B cell (primary cell): ENCODE measurements at regions of chr3 and their contacts with region 1.

Region 1: DNA sequence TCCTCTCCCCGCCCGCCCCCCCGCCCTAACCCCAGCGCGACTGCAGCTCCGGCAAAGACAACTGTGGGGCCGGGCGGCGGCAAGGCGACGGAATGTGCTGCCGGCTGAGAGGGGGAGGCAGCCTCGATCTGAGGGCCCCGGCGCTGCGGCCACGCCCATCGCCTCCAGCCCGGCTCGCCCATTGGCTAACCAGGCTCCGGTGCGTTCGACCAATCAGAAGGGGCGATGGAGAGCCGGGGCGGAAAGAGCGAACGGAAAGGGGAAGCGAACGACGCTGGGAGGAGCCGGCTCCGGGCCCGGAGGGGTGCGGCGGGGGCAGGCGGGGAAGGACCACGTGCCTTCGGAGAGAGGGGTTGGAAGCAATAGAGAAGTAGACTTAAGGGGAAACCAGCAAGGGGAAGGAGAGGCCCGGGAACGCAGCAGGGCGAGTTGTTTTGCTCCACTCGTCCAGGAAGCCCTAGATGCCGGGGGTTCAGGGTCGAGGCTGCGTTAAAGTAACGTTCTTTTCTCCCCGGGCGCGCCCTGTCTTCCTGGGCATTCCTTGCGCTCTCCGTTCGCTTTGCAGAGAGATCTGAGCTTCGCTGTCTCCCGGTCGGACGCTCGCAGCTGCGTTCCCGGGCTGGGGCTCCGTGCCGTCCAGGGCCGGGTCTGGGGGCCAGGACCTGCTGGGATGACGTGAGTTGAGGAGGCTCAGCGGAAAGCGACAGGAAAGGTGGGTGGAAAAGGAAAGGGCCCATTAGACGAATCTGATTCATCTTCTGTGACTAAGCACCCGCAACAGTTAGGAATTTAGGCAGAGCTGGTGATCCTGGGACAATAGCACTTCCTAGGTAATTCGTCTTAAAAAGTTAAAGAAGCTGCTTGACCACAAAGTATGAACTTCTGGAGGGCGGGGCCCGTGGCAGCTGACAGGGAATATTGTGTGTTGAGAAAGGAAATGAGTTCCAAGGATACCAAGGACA is at the start of gene KPNA4:
- DNase-seq: peak; percentile 99
- ATAC-seq: peak; percentile 86
- H3K4me3 ChIP-seq: peak within 1 kb of the TSS; percentile 58 to 92 (median 89)
- H3K4me3 Mint-ChIP-seq: peak within 1 kb of the TSS; percentile 97
- H3K27ac ChIP-seq: peak within 1 kb of the TSS; percentile 85 to 94
- H3K27ac Mint-ChIP-seq: peak within 1 kb of the TSS; percentile 99
- H3K4me1 ChIP-seq: peaks cover 23 to 45% of the 10 kb centered on the region in 2 donors
- H3K4me1 Mint-ChIP-seq: peaks cover 52% of the 10 kb centered on the region
- H3K27me3 ChIP-seq: no peaks in the 10 kb centered on the region
- H3K27me3 Mint-ChIP-seq: no peaks in the 10 kb centered on the region
- CTCF ChIP-seq: no peak
- total RNA-seq, gene KPNA4: 53.8 and 55.1 TPM in 2 replicates

Region 2: GRCh38 chr3:158644345-158644908 is 1921.3 kb before region 1 on chr3 and contains the start of gene GFM1:
- CTCF ChIA-PET with region 1: no interaction called
- POLR2A ChIA-PET with region 1: no interaction called
- intact Hi-C with region 1: loop called (anchors 10 kb)
- DNase-seq: peak; percentile 94
- ATAC-seq: peak; percentile 96
- H3K4me3 ChIP-seq: peak within 1 kb of the TSS; percentile 75 to 96 (median 91)
- H3K4me3 Mint-ChIP-seq: peak within 1 kb of the TSS; percentile 99
- H3K27ac ChIP-seq: peak within 1 kb of the TSS; percentile 63 to 85
- H3K27ac Mint-ChIP-seq: peak within 1 kb of the TSS; percentile 78
- H3K4me1 ChIP-seq: peaks cover 4 to 11% of the 10 kb centered on the region in 2 donors
- H3K4me1 Mint-ChIP-seq: peaks cover 22% of the 10 kb centered on the region
- H3K27me3 ChIP-seq: no peaks in the 10 kb centered on the region
- H3K27me3 Mint-ChIP-seq: no peaks in the 10 kb centered on the region
- CTCF ChIP-seq: peak; percentile 84
- total RNA-seq, gene GFM1: 46.0 and 46.8 TPM in 2 replicates

Region 3: GRCh38 chr3:160399125-160400029 is 166.3 kb before region 1 on chr3 and contains the starts of genes IFT80 and SMC4:
- CTCF ChIA-PET with region 1: no interaction called
- POLR2A ChIA-PET with region 1: no interaction called
- intact Hi-C with region 1: loop called (anchors 1 kb)
- DNase-seq: peak; percentile 97
- ATAC-seq: peak; percentile 96
- H3K4me3 ChIP-seq: peak within 1 kb of the TSS; percentile 71 to 97 (median 85)
- H3K4me3 Mint-ChIP-seq: peak within 1 kb of the TSS; percentile 98
- H3K27ac ChIP-seq: peak within 1 kb of the TSS; percentile 69 to 97
- H3K27ac Mint-ChIP-seq: peak within 1 kb of the TSS; percentile 98
- H3K4me1 ChIP-seq: peaks cover 26 to 45% of the 10 kb centered on the region in 2 donors
- H3K4me1 Mint-ChIP-seq: peaks cover 43% of the 10 kb centered on the region
- H3K27me3 ChIP-seq: peaks cover 0 to 25% (median 7%) of the 10 kb centered on the region in 4 experiments
- H3K27me3 Mint-ChIP-seq: no peaks in the 10 kb centered on the region
- CTCF ChIP-seq: no peak
- total RNA-seq, gene IFT80: 44.1 and 47.0 TPM in 2 replicates
- total RNA-seq, gene SMC4: 53.8 and 55.1 TPM in 2 replicates

Region 4: GRCh38 chr3:160486459-160486869 is 79.3 kb before region 1 on chr3:
- CTCF ChIA-PET with region 1: no interaction called
- POLR2A ChIA-PET with region 1: interaction called, 13 read pairs
- intact Hi-C with region 1: no loop called
- DNase-seq: peak; percentile 48
- ATAC-seq: no peak
- H3K4me3 ChIP-seq: no peak overlapping the region
- H3K4me3 Mint-ChIP-seq: no peak overlapping the region
- H3K27ac ChIP-seq: no peak overlapping the region
- H3K27ac Mint-ChIP-seq: no peak overlapping the region
- H3K4me1 ChIP-seq: peaks cover 3 to 7% of the 10 kb centered on the region in 2 donors
- H3K4me1 Mint-ChIP-seq: peaks cover 8% of the 10 kb centered on the region
- H3K27me3 ChIP-seq: no peaks in the 10 kb centered on the region
- H3K27me3 Mint-ChIP-seq: no peaks in the 10 kb centered on the region
- CTCF ChIP-seq: peak; percentile 83

Region 5: DNA sequence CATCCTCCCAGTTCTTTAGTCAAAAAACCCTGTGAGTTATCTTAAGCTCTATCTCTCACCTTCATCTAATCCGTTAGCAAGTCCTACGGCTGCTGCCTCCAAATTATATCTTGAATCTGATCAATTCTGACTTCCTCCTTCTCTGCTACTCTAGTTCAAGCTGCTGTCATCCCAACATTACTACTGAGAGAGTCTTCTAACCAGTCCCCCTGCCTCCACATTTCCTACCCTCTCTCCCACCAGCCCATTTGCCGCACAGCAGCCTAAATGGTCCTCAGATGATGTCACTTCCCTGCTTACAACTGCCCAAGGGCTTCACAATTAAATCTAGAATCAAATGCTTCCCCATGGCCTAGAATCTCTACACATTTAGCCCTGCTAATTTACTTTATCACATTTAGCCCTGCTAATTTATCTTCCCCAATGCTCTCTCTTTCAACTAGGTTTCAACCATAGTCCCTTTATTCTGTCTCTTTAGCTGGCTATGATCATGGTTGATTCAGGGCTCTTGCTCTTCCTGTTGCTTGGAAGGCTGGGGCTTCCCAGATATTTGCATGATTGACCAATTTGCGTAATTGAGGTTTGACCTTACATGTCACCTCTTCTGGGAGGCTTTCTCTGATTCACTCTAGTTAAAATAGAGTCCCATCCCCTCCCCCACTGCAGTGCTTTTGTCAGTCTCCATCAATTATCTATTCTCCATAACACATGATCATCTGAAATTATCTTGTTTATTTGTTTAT is 100.2 kb after region 1 on chr3:
- CTCF ChIA-PET with region 1: no interaction called
- POLR2A ChIA-PET with region 1: no interaction called
- intact Hi-C with region 1: loop called (anchors 2 kb)
- DNase-seq: peak; percentile 60
- ATAC-seq: peak; percentile 73
- H3K4me3 ChIP-seq: peak overlapping the region in 3 of 5 experiments; percentile 1 to 45 (median 27)
- H3K4me3 Mint-ChIP-seq: peak overlapping the region; percentile 73
- H3K27ac ChIP-seq: peak overlapping the region; percentile 77 to 88
- H3K27ac Mint-ChIP-seq: peak overlapping the region; percentile 84
- H3K4me1 ChIP-seq: peaks cover 9 to 10% of the 10 kb centered on the region in 2 donors
- H3K4me1 Mint-ChIP-seq: peaks cover 22% of the 10 kb centered on the region
- H3K27me3 ChIP-seq: no peaks in the 10 kb centered on the region
- H3K27me3 Mint-ChIP-seq: no peaks in the 10 kb centered on the region
- CTCF ChIP-seq: no peak

Region 6: DNA sequence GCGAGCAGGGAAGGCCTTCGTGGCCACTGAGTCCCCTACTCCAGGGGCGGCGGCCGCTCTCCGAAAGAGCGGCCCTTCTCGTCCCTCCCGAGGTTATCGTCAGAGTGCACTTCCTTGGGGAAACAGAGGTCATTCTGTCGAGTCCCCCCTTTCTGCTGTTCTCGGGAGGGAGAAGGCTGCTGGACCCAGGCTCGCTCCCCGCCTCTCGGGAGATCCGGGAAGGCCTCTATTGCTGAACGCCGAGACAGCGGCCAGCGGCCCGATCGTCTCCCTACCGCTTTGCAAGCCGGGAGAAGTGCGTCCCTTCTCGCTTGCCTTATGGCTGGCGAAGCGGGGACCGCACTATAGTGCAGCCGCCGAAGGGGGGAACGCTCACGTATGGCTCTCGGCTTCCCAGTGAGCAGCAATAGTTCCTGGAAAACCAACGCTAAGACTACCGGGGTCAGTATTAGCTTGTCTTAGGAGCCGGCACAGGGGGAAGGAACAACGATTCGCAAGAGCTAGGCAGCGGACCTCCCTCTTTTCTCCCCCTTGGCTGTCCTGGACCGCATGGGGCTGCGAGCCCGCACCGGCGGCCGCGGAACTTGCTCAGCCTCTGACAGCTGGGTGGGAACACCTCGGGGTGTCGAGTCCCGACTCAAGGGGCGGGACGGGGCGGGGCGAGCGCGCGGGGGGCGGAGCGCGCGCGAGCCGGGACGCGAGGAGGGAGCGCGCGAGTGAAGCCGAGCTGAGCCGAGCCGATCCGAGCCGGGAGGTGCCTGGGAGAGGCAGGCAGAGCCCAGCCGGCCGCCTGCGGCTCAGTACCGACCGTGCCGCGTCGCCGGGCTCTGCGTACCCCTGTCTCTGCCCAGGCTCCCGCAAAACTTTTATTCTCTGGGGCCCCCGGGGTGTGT is 189.4 kb after region 1 on chr3:
- CTCF ChIA-PET with region 1: no interaction called
- POLR2A ChIA-PET with region 1: no interaction called
- intact Hi-C with region 1: loop called (anchors 1 kb)
- DNase-seq: peak; percentile 93
- ATAC-seq: peak; percentile 81
- H3K4me3 ChIP-seq: peak overlapping the region; percentile 68 to 86 (median 81)
- H3K4me3 Mint-ChIP-seq: peak overlapping the region; percentile 98
- H3K27ac ChIP-seq: peak overlapping the region; percentile 72 to 82
- H3K27ac Mint-ChIP-seq: peak overlapping the region; percentile 95
- H3K4me1 ChIP-seq: peaks cover 25% of the 10 kb centered on the region in 2 donors
- H3K4me1 Mint-ChIP-seq: peaks cover 31% of the 10 kb centered on the region
- H3K27me3 ChIP-seq: peaks cover 0 to 11% (median 4%) of the 10 kb centered on the region in 4 experiments
- H3K27me3 Mint-ChIP-seq: peaks cover 21% of the 10 kb centered on the region
- CTCF ChIP-seq: no peak

Region 7: DNA sequence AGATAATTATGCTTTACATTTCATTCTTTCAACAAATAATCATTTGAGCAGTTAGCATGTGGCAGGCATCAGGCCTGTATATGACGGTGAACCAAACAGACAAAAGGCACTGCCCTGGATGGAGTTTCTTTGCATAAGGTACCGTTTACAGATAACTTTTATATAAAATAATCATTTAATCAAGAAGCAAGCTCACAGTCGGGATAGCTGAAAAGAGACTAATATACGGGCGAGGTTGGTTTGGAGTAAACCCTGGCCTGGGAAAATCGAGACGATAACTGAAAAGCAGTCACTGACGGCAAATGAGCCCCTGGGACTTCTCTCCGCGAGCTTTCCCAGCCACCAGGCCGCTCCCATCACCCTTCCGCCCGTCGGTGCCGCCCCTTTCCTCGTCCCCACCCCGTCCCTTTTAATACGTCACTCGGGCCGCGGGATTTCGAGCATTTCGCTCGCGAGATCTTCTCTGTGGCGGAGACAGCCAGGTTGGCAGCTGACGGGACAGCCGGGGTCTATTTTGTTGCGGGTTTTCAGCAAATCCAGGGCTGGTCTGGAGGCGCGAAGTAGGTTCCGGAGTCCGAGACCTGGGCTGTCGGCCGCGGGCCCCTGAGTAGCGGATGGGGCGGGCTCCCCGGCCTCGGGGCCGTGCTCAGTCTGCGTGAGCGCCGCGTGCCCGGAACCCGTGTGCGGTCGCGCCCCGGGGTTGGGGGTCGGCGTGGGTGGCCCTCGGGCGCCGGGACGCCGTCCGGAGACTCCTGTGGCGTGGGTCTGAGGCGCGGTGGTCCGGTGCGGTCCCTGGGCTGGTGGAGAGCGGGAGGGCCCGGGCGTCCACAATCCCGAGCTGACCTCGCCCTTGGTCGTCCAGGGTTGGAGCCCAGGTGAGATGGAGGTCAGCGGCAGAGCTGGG is 655.4 kb after region 1 on chr3 and contains the start of gene NMD3:
- CTCF ChIA-PET with region 1: no interaction called
- POLR2A ChIA-PET with region 1: no interaction called
- intact Hi-C with region 1: loop called (anchors 1 kb)
- DNase-seq: peak; percentile 93
- ATAC-seq: peak; percentile 95
- H3K4me3 ChIP-seq: peak within 1 kb of the TSS; percentile 70 to 95 (median 92)
- H3K4me3 Mint-ChIP-seq: peak within 1 kb of the TSS; percentile 94
- H3K27ac ChIP-seq: peak within 1 kb of the TSS; percentile 64 to 81
- H3K27ac Mint-ChIP-seq: peak within 1 kb of the TSS; percentile 94
- H3K4me1 ChIP-seq: peaks cover 22% of the 10 kb centered on the region in 2 donors
- H3K4me1 Mint-ChIP-seq: peaks cover 27% of the 10 kb centered on the region
- H3K27me3 ChIP-seq: peaks cover 0 to 5% (median 2%) of the 10 kb centered on the region in 4 experiments
- H3K27me3 Mint-ChIP-seq: peaks cover 10% of the 10 kb centered on the region
- CTCF ChIP-seq: no peak
- total RNA-seq, gene NMD3: 36.1 and 38.0 TPM in 2 replicates